ENCODE measurements at regions of chr3 and their contacts with region 1.

Region 1: GRCh38 chr3:133821767-133822638 is 16.4 kb downstream of the SRPRB start:
- DNase-seq: peak in 1 of 3 donors; percentile 33
- ATAC-seq: peak; percentile 72
- H3K4me3 ChIP-seq: no peak overlapping the region
- H3K4me1 ChIP-seq: no peaks in the 10 kb centered on the region
- CTCF ChIP-seq: no peak

Region 2: DNA sequence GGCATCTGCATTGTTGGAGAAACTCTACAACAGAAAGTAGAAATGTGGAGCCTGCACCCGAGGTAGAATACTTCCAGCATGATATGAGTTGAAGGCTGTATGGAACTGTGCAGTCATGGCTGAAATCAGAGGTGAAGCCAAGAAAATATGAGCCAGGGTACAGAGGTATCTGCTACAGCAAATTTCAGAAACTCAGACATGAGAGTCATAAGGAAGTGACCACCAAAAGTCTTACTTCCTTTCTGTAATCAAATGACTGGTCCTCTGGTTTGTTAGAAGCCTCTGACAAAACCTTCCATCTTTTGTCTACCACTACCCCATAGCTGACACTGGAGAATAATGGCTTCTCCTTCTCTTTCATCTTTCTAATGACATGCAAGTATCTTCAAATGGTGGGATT is 624.4 kb before region 1 on chr3:
- intact Hi-C with region 1: no loop called
- DNase-seq: no peak
- ATAC-seq: no peak
- H3K4me3 ChIP-seq: no peak overlapping the region
- H3K4me1 ChIP-seq: no peaks in the 10 kb centered on the region
- CTCF ChIP-seq: no peak

Region 3: GRCh38 chr3:133475245-133476010 is 346.6 kb before region 1 on chr3:
- intact Hi-C with region 1: no loop called
- DNase-seq: no peak
- ATAC-seq: no peak
- H3K4me3 ChIP-seq: no peak overlapping the region
- H3K4me1 ChIP-seq: peaks cover 22% of the 10 kb centered on the region
- CTCF ChIP-seq: no peak

Region 4: GRCh38 chr3:133750259-133750656 is 71.7 kb before region 1 on chr3:
- intact Hi-C with region 1: no loop called
- DNase-seq: peak in 1 of 3 donors; percentile 9
- ATAC-seq: no peak
- H3K4me3 ChIP-seq: no peak overlapping the region
- H3K4me1 ChIP-seq: peaks cover 5% of the 10 kb centered on the region
- CTCF ChIP-seq: no peak

Region 5: GRCh38 chr3:133927540-133928066 is 105.6 kb after region 1 on chr3:
- intact Hi-C with region 1: loop called (anchors 5 kb)
- DNase-seq: peak in 2 of 3 donors; percentile 58 to 71
- ATAC-seq: peak; percentile 80
- H3K4me3 ChIP-seq: no peak overlapping the region
- H3K4me1 ChIP-seq: peaks cover 5% of the 10 kb centered on the region
- CTCF ChIP-seq: peak; percentile 72

Region 6: DNA sequence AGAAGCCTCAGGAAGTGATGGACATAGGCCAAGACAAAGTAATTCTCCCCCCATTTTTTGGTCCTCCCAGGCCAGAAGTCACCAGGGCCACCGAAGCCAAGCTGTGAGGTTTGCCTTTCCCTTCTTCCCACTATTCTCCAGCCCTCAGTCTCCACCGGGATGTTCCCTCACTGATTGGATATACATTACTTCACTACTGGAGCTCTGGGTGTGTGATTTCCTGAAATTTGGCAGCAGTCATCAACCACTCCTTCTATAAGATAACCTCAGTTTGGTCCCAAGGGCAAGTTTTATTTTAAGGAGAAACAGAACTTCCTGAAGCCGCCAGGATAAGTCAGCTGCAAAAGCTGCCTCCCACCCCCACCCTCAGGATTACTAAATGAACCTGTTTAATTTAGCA is 196.4 kb after region 1 on chr3:
- intact Hi-C with region 1: no loop called
- DNase-seq: no peak
- ATAC-seq: no peak
- H3K4me3 ChIP-seq: no peak overlapping the region
- H3K4me1 ChIP-seq: no peaks in the 10 kb centered on the region
- CTCF ChIP-seq: no peak

Measured in mucosa of descending colon (tissue), 3 donors.